Activated T-helper 1 cell treated with anti-CD3 and anti-CD28 coated beads, Interleukin-12 subunit alpha, Interleukin-12 subunit beta, Interleukin-2, Interleukin-4 antibody, amounts not matched to agents 30 ng/mL and 10 ng/mL and 1 ng/mL, durations not matched to agents 14 hours and 24 hours and 36 hours (primary cell): ENCODE measurements at regions of chr20 and their contacts with region 1.

Region 1: GRCh38 chr20:23995905-23996666 is 7.5 kb upstream of the GGTLC1 start:
- DNase-seq: peak; percentile 6
- H3K4me3 Mint-ChIP-seq: no peak overlapping the region
- H3K27ac Mint-ChIP-seq: no peak overlapping the region
- H3K4me1 Mint-ChIP-seq: no peaks in the 10 kb centered on the region
- H3K27me3 Mint-ChIP-seq: peaks cover 22% of the 10 kb centered on the region

Region 2: DNA sequence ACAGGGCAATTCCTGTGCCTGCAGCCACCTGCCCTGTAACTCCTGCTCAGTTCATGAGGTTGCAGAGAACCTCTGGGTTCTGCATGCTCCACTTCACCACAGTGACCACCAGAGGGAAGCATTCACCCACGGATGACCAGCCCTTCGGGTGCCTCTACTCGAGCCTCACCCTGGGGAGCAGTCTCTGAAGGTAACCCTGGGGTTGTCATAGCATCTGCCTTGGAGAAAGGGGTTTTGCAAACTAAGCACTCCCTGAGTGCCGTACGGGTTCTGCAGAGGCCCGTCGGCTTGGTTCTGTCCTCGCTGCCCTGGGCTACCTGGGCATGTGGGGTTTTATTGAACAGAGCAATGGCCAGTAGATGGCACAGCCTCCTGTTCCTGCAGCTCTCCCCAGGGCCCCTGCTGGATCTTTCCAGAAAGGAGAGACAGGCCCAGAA is 106.3 kb before region 1 on chr20:
- intact Hi-C with region 1: loop called (anchors 10 kb)
- DNase-seq: peak; percentile 54
- H3K4me3 Mint-ChIP-seq: no peak overlapping the region
- H3K27ac Mint-ChIP-seq: no peak overlapping the region
- H3K4me1 Mint-ChIP-seq: no peaks in the 10 kb centered on the region
- H3K27me3 Mint-ChIP-seq: peaks cover under 1% of the 10 kb centered on the region

Region 3: GRCh38 chr20:23937303-23938117 is 58.6 kb before region 1 on chr20:
- intact Hi-C with region 1: loop called (anchors 1 kb)
- DNase-seq: peak; percentile 33
- H3K4me3 Mint-ChIP-seq: no peak overlapping the region
- H3K27ac Mint-ChIP-seq: no peak overlapping the region
- H3K4me1 Mint-ChIP-seq: no peaks in the 10 kb centered on the region
- H3K27me3 Mint-ChIP-seq: peaks cover 3% of the 10 kb centered on the region